ENCODE measurements at regions of chr14 and their contacts with region 1.

Region 1: GRCh38 chr14:20690848-20691523 is 2.4 kb downstream of the ANG start:
- DNase-seq: peak; percentile 59
- H3K4me3 Mint-ChIP-seq: no peak overlapping the region
- H3K27ac Mint-ChIP-seq: no peak overlapping the region
- H3K4me1 Mint-ChIP-seq: peaks cover 21% of the 10 kb centered on the region
- H3K27me3 Mint-ChIP-seq: no peaks in the 10 kb centered on the region

Region 2: DNA sequence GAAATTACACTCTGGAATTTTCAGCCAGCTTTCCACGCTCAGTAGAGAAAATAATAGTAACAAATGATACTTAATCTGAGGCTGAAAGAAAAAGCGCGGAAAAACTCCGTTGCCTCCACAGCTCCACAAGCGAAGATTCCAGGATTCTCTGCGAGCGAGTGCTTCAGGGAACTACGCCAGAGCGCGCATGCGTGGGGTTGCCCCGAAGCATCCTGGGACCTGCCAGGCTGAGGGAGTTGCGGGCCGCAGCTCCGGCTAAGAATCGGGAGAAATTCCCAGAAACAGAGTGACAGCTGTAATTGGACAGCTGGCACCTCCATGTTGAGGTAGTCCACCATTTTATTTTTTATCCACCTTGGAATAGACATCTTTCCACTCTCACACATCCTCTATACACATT is 373.3 kb before region 1 on chr14:
- CTCF ChIA-PET with region 1: no interaction called
- POLR2A ChIA-PET with region 1: no interaction called
- DNase-seq: no peak
- H3K4me3 Mint-ChIP-seq: no peak overlapping the region
- H3K27ac Mint-ChIP-seq: no peak overlapping the region
- H3K4me1 Mint-ChIP-seq: no peaks in the 10 kb centered on the region
- H3K27me3 Mint-ChIP-seq: no peaks in the 10 kb centered on the region

Region 3: GRCh38 chr14:20657216-20658128 is 33.5 kb before region 1 on chr14:
- CTCF ChIA-PET with region 1: interaction called, 32 read pairs
- POLR2A ChIA-PET with region 1: no interaction called
- DNase-seq: peak; percentile 25
- H3K4me3 Mint-ChIP-seq: no peak overlapping the region
- H3K27ac Mint-ChIP-seq: no peak overlapping the region
- H3K4me1 Mint-ChIP-seq: peaks cover 36% of the 10 kb centered on the region
- H3K27me3 Mint-ChIP-seq: peaks cover 44% of the 10 kb centered on the region

Region 4: GRCh38 chr14:20662968-20663732 is 27.8 kb before region 1 on chr14:
- CTCF ChIA-PET with region 1: interaction called, 32 read pairs
- POLR2A ChIA-PET with region 1: no interaction called
- DNase-seq: peak; percentile 82
- H3K4me3 Mint-ChIP-seq: peak overlapping the region; percentile 66
- H3K27ac Mint-ChIP-seq: peak overlapping the region; percentile 55
- H3K4me1 Mint-ChIP-seq: peaks cover 46% of the 10 kb centered on the region
- H3K27me3 Mint-ChIP-seq: peaks cover 15% of the 10 kb centered on the region

Measured in activated CD4-positive, alpha-beta T cell treated with anti-CD3 and anti-CD28 coated beads, Interleukin-2, amount 10 ng/mL, durations not matched to agents 7 days and 5 days (primary cell).